ENCODE measurements at regions of chr12 and their contacts with region 1.

Region 1: GRCh38 chr12:45234139-45234846 is 18.4 kb downstream of the ANO6 start:
- DNase-seq: peak; percentile 85
- H3K4me3 ChIP-seq: no peak overlapping the region
- H3K27ac ChIP-seq: peak overlapping the region; percentile 75
- H3K4me1 ChIP-seq: peaks cover 53% of the 10 kb centered on the region
- H3K27me3 ChIP-seq: no peaks in the 10 kb centered on the region
- CTCF ChIP-seq: no peak

Region 2: DNA sequence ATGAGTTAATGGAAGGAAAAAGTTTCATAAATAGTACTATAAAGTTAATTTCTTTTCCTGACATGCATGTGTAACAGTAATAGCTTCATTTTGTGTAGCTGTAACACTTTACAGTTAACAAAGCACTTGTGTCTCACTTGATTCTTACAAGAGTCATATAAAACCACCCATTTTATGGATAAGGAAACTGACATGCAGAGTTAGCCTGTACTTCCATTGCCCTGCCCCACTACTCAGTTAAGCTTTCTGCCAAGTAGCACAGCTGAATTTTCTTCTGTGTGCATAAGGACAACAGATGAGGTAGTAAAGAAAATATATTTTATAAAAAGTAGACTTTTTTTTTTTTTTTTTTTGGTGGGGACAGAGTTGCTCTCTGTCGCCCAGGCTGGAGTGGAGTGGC is 13.8 kb after region 1 on chr12:
- CTCF ChIA-PET with region 1: no interaction called
- POLR2A ChIA-PET with region 1: no interaction called
- intact Hi-C with region 1: loop called (anchors 2 kb)
- DNase-seq: no peak
- H3K4me3 ChIP-seq: no peak overlapping the region
- H3K27ac ChIP-seq: no peak overlapping the region
- H3K4me1 ChIP-seq: peaks cover 15% of the 10 kb centered on the region
- H3K27me3 ChIP-seq: no peaks in the 10 kb centered on the region
- CTCF ChIP-seq: no peak